ENCODE measurements at regions of chr2 and their contacts with region 1.

Region 1: GRCh38 chr2:219726916-219727315 is 99.5 kb downstream of the SLC4A3 start:
- DNase-seq: peak in 2 of 4 experiments; percentile 24 to 37
- ATAC-seq: peak; percentile 63
- H3K4me3 ChIP-seq: no peak overlapping the region
- H3K27ac ChIP-seq: no peak overlapping the region
- H3K4me1 ChIP-seq: peaks cover 0 to 24% of the 10 kb centered on the region in 2 experiments; a peak in 3 of 5 replicates
- H3K27me3 ChIP-seq: no peaks in the 10 kb centered on the region; a peak in 1 of 5 replicates
- CTCF ChIP-seq: peak; percentile 33 to 47 (median 42); a peak in 5 of 6 replicates
- EP300 ChIP-seq: no peak
- POLR2A ChIP-seq: no peak
- RAD21 ChIP-seq: peak in 1 of 2 experiments; percentile 40; a peak in 2 of 4 replicates

Region 2: DNA sequence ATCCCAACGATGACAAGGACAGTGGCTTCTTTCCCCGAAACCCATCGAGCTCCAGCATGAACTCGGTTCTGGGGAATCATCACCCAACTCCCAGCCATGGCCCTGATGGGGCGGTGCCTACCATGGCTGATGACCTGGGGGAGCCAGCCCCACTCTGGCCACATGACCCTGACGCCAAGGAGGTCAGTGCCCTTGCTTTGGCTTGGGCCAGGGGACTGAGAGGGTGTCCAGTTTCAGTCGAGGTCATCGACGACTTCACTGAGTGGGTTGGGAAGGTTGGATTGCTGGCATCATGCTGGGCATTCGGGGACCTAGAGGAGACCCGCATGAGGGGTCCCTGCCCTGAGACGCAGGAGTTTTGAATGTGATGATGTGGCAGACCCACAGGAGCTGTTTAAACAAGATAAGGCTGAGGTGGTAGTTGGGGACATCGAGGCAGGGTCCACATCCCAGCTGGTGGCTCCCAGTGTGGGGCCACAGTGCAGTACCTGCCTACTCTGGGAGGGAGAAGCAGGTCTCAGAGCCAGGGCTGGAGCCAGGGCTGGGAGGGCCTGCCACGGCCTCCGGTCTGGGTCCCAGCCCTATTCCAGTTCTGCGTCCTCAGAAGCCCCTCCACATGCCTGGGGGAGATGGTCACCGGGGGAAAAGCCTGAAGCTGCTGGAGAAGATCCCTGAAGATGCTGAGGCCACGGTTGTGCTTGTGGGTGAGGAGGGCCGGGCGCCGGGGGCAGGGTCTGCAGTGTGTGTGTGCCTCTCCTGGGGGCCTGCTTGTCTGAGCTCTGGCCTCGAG is 93.4 kb before region 1 on chr2:
- CTCF ChIA-PET with region 1: interaction called, 3 read pairs
- POLR2A ChIA-PET with region 1: no interaction called
- in situ Hi-C with region 1: no loop called
- intact Hi-C with region 1: loop called (anchors 5 kb)
- DNase-seq: no peak
- ATAC-seq: no peak
- H3K4me3 ChIP-seq: no peak overlapping the region
- H3K27ac ChIP-seq: no peak overlapping the region
- H3K4me1 ChIP-seq: peaks cover 0 to 56% of the 10 kb centered on the region in 2 experiments; a peak in 3 of 5 replicates
- H3K27me3 ChIP-seq: peaks cover 2 to 26% of the 10 kb centered on the region in 2 experiments; a peak in 3 of 5 replicates
- CTCF ChIP-seq: no peak
- EP300 ChIP-seq: no peak
- POLR2A ChIP-seq: no peak
- RAD21 ChIP-seq: no peak

Measured in K562 (cell line).